WTC11 (cell line): ENCODE measurements at regions of chr6 and their contacts with region 1.

Region 1: GRCh38 chr6:110039364-110039980 is 61.4 kb downstream of the GPR6 start:
- DNase-seq: peak; percentile 89
- ATAC-seq: peak; percentile 80
- H3K4me3 Mint-ChIP-seq: peak overlapping the region; percentile 71
- H3K27ac Mint-ChIP-seq: peak overlapping the region; percentile 91
- H3K4me1 Mint-ChIP-seq: peaks cover 23% of the 10 kb centered on the region
- H3K27me3 Mint-ChIP-seq: no peaks in the 10 kb centered on the region
- CTCF ChIP-seq: peak; percentile 92

Region 2: DNA sequence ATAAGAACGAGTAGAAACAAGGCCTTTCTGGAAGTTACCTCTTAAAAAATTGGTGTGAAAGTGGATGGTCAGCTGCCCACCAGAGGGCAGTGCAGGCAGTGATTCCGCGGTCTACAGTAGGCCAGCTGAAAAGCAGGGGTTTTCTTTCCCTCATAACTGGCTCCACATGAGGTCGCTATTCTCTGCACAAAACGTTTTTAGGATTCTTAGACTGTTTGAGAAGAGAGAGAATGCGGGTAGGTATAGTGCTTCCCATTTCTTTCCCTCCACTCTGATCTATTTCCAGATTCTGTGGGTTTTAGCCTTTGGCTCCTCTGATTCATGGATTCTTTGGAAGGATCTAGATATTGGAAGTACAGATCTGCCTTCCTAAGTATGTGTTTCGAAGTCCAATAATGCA is 334.2 kb before region 1 on chr6:
- CTCF ChIA-PET with region 1: interaction called, 124 read pairs
- POLR2A ChIA-PET with region 1: interaction called, 3 read pairs
- DNase-seq: peak; percentile 81
- ATAC-seq: peak; percentile 91
- H3K4me3 Mint-ChIP-seq: no peak overlapping the region
- H3K27ac Mint-ChIP-seq: peak overlapping the region; percentile 35; the same call in 1 of the 2 replicates
- H3K4me1 Mint-ChIP-seq: peaks cover 41% of the 10 kb centered on the region
- H3K27me3 Mint-ChIP-seq: no peaks in the 10 kb centered on the region
- CTCF ChIP-seq: peak; percentile 87

Region 3: GRCh38 chr6:109788687-109789086 is 250.8 kb before region 1 on chr6:
- CTCF ChIA-PET with region 1: interaction called, 97 read pairs
- POLR2A ChIA-PET with region 1: no interaction called
- DNase-seq: no peak
- ATAC-seq: no peak
- H3K4me3 Mint-ChIP-seq: no peak overlapping the region
- H3K27ac Mint-ChIP-seq: peak overlapping the region; percentile 34; the same call in 1 of the 2 replicates
- H3K4me1 Mint-ChIP-seq: peaks cover 28% of the 10 kb centered on the region
- H3K27me3 Mint-ChIP-seq: no peaks in the 10 kb centered on the region
- CTCF ChIP-seq: no peak

Region 4: DNA sequence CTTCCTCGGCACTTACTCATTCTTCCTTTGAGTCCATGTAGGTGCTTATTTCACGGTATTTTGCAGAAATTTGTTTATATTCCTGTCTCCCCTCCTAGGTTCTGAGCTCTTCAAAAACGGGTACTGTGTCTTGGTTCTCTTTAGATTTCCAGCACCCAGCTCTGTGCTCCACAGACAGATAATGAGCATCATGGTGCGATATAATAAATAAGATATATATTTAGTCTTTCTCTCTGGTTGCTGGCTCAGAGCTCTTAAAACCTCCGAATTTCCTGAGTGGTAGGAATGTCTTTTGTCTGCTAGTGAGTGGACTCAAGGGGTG is 169.4 kb before region 1 on chr6:
- CTCF ChIA-PET with region 1: interaction called, 10 read pairs
- POLR2A ChIA-PET with region 1: no interaction called
- DNase-seq: no peak
- ATAC-seq: no peak
- H3K4me3 Mint-ChIP-seq: no peak overlapping the region
- H3K27ac Mint-ChIP-seq: no peak overlapping the region
- H3K4me1 Mint-ChIP-seq: peaks cover 39% of the 10 kb centered on the region
- H3K27me3 Mint-ChIP-seq: peaks cover 6% of the 10 kb centered on the region; the same call in 1 of the 2 replicates
- CTCF ChIP-seq: no peak

Region 5: DNA sequence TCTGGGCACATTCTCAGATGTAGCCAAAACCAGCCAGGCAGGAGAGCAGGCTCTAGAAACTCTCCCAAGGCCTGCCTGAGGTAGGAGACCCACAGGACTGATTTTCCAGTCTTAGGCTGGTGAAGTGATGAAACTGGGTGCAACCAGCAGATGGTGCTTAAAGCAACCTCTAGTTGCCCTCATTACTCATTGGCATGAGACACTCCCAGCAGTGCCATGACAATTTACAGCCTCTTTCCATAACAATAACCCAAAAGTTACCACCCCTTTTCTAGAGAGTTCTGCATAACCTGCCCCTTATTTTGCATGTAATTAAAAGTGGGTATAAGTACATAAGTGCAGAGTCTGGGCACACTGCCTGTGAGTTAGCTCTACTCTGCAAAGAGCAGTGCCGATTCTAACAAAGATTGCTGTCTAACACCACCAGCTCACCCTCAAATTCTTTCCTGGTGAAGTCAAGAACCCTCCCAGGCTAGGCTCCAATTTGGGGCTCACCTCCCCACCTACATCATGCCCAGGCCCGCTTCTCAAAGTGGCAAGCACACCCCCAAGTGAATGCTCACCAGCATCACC is 75.8 kb before region 1 on chr6:
- CTCF ChIA-PET with region 1: interaction called, 16 read pairs
- POLR2A ChIA-PET with region 1: interaction called, 8 read pairs
- DNase-seq: no peak
- ATAC-seq: no peak
- H3K4me3 Mint-ChIP-seq: no peak overlapping the region
- H3K27ac Mint-ChIP-seq: no peak overlapping the region
- H3K4me1 Mint-ChIP-seq: peaks cover 12% of the 10 kb centered on the region
- H3K27me3 Mint-ChIP-seq: peaks cover 13% of the 10 kb centered on the region
- CTCF ChIP-seq: no peak

Region 6: DNA sequence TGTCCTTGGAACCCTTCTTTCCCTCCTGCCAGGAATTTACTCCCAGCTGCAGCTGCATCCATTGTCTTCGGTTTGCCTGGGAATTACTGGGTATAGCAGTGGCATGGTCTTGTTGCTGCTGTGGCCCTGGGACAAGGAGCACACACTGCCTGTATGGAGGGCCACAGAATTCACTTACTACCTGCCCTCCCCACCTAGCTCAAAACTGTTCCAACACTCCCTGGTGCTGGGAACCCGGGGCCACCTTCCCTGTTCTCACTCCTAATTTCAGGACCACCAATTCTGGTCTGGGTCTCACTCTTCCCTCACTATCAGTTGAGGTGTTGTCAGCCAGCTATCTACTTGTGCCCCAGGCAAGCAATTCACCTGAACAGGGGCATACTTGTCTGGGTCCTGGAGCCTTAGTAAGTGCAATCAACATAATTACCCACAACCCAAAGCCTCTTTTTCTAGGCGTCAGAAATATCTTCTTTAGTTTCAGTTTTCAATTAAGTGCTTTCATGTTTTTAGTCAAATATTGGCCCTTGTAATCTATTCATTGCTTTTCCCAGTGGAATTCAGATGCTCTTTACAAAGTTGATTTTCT is 271.5 kb after region 1 on chr6:
- CTCF ChIA-PET with region 1: no interaction called
- POLR2A ChIA-PET with region 1: no interaction called
- DNase-seq: no peak
- ATAC-seq: peak; percentile 32
- H3K4me3 Mint-ChIP-seq: no peak overlapping the region
- H3K27ac Mint-ChIP-seq: no peak overlapping the region
- H3K4me1 Mint-ChIP-seq: peaks cover 7% of the 10 kb centered on the region; the same call in 1 of the 2 replicates
- H3K27me3 Mint-ChIP-seq: no peaks in the 10 kb centered on the region; the same call in 1 of the 2 replicates
- CTCF ChIP-seq: no peak

Region 7: GRCh38 chr6:110389689-110390382 is 350.4 kb after region 1 on chr6:
- CTCF ChIA-PET with region 1: interaction called, 17 read pairs
- POLR2A ChIA-PET with region 1: no interaction called
- DNase-seq: no peak
- ATAC-seq: no peak
- H3K4me3 Mint-ChIP-seq: no peak overlapping the region
- H3K27ac Mint-ChIP-seq: no peak overlapping the region
- H3K4me1 Mint-ChIP-seq: peaks cover 19% of the 10 kb centered on the region
- H3K27me3 Mint-ChIP-seq: no peaks in the 10 kb centered on the region
- CTCF ChIP-seq: no peak